Caco-2 (cell line): ENCODE measurements at regions of chr7 and their contacts with region 1.

Region 1: GRCh38 chr7:122699017-122699416 is at the start of gene RNF133:
- DNase-seq: no peak
- H3K4me3 ChIP-seq: no peak within 1 kb of the TSS
- H3K4me3 Mint-ChIP-seq: no peak within 1 kb of the TSS
- H3K27ac Mint-ChIP-seq: no peak within 1 kb of the TSS
- H3K4me1 ChIP-seq: no peaks in the 10 kb centered on the region
- H3K4me1 Mint-ChIP-seq: no peaks in the 10 kb centered on the region
- H3K27me3 ChIP-seq: no peaks in the 10 kb centered on the region
- H3K27me3 Mint-ChIP-seq: peaks cover 3% of the 10 kb centered on the region
- CTCF ChIP-seq: no peak
- total RNA-seq, gene RNF133: 0.21 TPM in 1 of 2 replicates, not detected in the other

Region 2: DNA sequence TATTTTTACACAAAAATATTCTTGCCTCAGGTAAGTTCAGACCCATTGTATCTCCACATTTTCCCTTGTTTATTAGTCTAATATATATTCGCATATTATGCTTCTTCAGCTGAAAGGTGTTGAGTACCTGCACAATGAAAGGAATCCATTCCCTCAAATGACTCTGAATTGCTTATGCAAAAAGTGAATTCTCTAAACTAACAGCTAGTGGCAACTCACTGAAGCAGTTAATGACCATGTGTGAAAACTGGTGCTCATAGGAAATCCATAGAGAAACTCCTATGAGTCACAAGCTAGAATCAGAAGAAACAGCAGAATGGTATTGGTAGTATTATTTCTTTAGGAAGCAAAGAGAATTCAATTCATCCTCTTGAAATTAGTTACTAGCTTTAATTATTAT is 37.2 kb after region 1 on chr7:
- CTCF ChIA-PET with region 1: no interaction called
- POLR2A ChIA-PET with region 1: interaction called, 19 read pairs
- intact Hi-C with region 1: no loop called
- DNase-seq: no peak
- H3K4me3 ChIP-seq: no peak overlapping the region
- H3K4me3 Mint-ChIP-seq: no peak overlapping the region
- H3K27ac Mint-ChIP-seq: no peak overlapping the region
- H3K4me1 ChIP-seq: no peaks in the 10 kb centered on the region
- H3K4me1 Mint-ChIP-seq: no peaks in the 10 kb centered on the region
- H3K27me3 ChIP-seq: no peaks in the 10 kb centered on the region
- H3K27me3 Mint-ChIP-seq: no peaks in the 10 kb centered on the region
- CTCF ChIP-seq: no peak